Activated CD4-positive, alpha-beta T cell treated with anti-CD3 and anti-CD28 coated beads, Interleukin-2, amount 10 ng/mL, durations not matched to agents 7 days and 5 days (primary cell): ENCODE measurements at regions of chr16 and their contacts with region 1.

Region 1: DNA sequence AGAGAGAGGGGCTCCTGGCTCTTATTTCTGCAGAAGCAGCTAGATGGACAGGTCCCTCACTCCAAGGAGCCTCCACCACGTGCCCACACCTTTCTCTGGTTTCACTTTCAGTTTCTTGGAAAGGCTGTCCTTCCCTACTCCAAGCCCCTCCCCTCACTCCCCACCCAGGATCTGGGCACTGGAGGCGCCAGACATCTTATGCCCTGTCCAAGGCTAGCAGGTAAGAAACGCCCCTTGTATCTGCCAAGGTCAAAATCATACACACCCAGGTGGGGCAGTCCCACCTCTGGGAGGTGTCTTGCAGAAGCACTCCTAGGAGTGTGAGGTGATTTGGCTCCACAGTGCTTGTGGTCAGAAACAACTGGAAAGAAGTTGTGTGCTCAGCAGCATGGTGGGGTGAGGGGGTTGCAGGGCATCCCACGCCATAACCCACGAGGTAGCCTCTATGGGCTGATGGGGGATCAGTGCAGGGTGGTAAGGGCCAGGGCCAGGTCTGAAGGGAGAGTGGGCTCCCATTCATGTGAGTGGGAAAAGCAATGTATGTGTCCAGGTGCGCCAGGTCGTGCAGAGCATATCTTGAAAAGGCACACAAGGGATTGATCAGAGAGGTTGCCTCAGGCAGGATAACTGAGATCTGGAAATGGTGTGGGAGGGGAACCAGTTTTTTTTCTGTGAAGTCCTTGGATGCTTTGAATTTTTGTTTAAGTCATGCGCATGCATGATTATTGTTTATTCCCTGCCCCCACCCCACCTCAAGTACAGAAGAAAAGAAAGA is 31.8 kb upstream of the PRM1 start:
- DNase-seq: peak; percentile 67
- H3K4me3 Mint-ChIP-seq: peak overlapping the region; percentile 23
- H3K27ac Mint-ChIP-seq: peak overlapping the region; percentile 79
- H3K4me1 Mint-ChIP-seq: peaks cover 83% of the 10 kb centered on the region
- H3K27me3 Mint-ChIP-seq: no peaks in the 10 kb centered on the region

Region 2: DNA sequence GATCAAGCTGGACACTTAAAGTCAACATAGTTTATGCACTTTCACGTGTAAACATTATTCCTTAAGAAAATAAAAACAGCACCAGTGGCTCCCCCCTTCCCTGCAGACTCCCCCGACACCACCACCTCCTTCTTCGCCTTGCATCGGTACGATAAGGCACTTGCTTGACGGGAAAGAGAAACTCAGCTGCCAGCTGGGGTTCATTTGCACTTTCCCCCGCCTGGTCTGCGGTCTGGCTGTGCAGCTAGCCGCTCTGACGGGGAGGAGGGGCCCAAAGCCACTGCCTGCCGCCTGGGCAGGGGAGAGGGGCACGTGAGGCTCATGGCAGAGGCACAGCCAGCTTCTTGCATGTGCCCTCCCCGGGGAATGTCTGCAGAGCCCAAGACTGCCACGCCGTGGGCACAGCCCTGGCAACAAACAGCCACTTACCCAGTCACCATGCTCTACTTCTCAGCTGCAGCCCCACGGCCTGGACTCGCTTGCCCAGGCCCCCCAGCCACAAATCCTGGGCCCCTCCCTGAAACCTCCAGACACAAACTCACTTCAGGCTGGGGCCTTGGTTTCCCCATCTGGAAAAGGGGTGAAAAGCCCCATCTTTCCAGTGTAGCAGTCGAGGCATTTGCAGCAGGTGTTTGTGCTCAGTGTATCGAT is 15.3 kb before region 1 on chr16:
- CTCF ChIA-PET with region 1: interaction called, 28 read pairs
- POLR2A ChIA-PET with region 1: interaction called, 10 read pairs
- DNase-seq: peak; percentile 90
- H3K4me3 Mint-ChIP-seq: peak overlapping the region; percentile 51
- H3K27ac Mint-ChIP-seq: peak overlapping the region; percentile 94
- H3K4me1 Mint-ChIP-seq: peaks cover 77% of the 10 kb centered on the region
- H3K27me3 Mint-ChIP-seq: peaks cover 2% of the 10 kb centered on the region

Region 3: GRCh38 chr16:11327277-11328171 is 14.6 kb after region 1 on chr16:
- CTCF ChIA-PET with region 1: interaction called, 11 read pairs
- POLR2A ChIA-PET with region 1: interaction called, 3 read pairs
- DNase-seq: no peak
- H3K4me3 Mint-ChIP-seq: peak overlapping the region; percentile 71
- H3K27ac Mint-ChIP-seq: peak overlapping the region; percentile 94
- H3K4me1 Mint-ChIP-seq: peaks cover 74% of the 10 kb centered on the region
- H3K27me3 Mint-ChIP-seq: no peaks in the 10 kb centered on the region